ENCODE measurements at regions of chr2 and their contacts with region 1.

Region 1: DNA sequence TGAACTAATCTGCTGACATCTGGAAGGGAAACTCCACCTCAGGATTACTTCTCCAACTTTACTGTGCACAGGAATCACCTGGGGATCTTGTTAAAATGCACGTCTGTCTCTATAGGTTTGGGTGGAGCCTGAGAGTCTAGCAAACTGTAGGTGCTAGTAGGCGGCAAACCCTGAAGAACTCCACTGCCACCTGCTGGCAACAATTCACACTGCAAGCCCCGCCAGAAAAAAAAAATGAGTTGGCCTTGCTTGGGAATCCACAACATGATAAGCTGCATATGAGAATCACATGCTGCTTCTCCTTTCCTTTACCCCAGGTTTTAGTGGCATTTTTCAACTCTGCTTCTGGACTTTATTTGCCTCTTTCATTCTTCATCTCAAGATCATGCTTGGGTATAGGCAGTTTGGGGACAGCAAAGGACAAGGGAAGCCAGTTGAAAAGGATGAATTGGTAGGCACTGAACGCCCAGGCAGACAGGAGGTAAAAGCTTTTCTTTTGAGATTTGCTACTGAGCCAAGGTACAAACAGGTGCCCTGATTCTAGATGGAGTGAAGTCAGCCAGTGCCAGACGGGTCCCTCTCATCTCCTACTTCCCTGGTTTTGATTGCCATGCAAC is 88.8 kb downstream of the VIT start:
- DNase-seq: peak; percentile 69 to 94
- H3K4me3 ChIP-seq: peak overlapping the region in 1 of 4 experiments; percentile 23; a peak in 1 of 8 replicates
- H3K27ac ChIP-seq: no peak overlapping the region
- H3K4me1 ChIP-seq: peaks cover 0 to 11% (median 5%) of the 10 kb centered on the region in 4 experiments; a peak in 5 of 7 replicates
- H3K27me3 ChIP-seq: no peaks in the 10 kb centered on the region
- CTCF ChIP-seq: peak; percentile 81 to 92 (median 86)
- EP300 ChIP-seq: no peak
- POLR2A ChIP-seq: no peak
- RAD21 ChIP-seq: peak; percentile 79 to 86

Region 2: GRCh38 chr2:36701391-36701795 is 83.9 kb before region 1 on chr2:
- CTCF ChIA-PET with region 1: interaction called, 10 read pairs
- POLR2A ChIA-PET with region 1: no interaction called
- DNase-seq: peak in 1 of 2 experiments; percentile 14
- H3K4me3 ChIP-seq: no peak overlapping the region
- H3K27ac ChIP-seq: no peak overlapping the region
- H3K4me1 ChIP-seq: peaks cover 0 to 3% (median 0%) of the 10 kb centered on the region in 4 experiments; a peak in 1 of 7 replicates
- H3K27me3 ChIP-seq: no peaks in the 10 kb centered on the region
- CTCF ChIP-seq: 0 out of 4 replicates have a peak, but pooled peaks of 1 of the 3 experiments have one; percentile 2
- EP300 ChIP-seq: no peak
- POLR2A ChIP-seq: no peak
- RAD21 ChIP-seq: no peak

Region 3: DNA sequence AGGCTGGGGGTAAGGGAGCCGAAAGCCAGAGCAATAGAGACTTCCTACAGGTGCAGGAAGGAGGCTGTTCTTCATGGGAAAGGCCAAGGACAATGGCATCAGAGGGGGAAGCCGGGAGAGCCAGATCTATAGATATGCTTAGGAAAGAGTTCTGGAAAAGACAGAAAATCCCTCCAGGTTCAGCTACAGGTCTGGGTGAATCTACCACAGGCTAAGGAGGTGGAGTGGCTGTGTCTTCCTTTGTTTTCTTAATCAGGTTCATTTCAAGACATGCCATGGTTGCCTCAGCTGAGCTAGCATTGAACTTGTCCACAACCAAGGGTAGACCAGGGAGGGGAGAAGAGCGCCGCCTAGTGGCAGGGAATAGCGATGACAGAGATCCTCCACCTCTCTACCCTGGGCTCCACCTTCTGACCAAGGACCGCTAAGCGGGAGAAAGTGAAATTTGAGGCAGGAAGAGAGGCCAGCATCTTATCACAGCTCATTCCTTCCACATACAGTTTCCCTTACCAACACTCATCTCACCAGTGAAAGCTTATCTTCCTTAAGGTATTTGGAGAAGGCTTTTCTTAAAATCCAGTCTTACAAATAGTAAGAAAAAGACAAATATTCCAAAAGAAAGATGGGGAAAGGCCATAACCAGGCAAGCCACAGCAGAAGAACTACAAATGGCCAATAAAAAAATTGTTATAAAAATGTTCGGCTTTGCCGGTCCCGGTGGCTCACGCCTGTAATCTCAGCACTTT is 14.6 kb before region 1 on chr2:
- CTCF ChIA-PET with region 1: interaction called, 110 read pairs
- POLR2A ChIA-PET with region 1: interaction called, 3 read pairs
- DNase-seq: peak; percentile 62 to 86
- H3K4me3 ChIP-seq: no peak overlapping the region
- H3K27ac ChIP-seq: no peak overlapping the region
- H3K4me1 ChIP-seq: no peaks in the 10 kb centered on the region; a peak in 1 of 7 replicates
- H3K27me3 ChIP-seq: no peaks in the 10 kb centered on the region; a peak in 1 of 7 replicates
- CTCF ChIP-seq: peak; percentile 96 to 99 (median 98)
- EP300 ChIP-seq: no peak
- POLR2A ChIP-seq: no peak
- RAD21 ChIP-seq: peak; percentile 90 to 91

Region 4: DNA sequence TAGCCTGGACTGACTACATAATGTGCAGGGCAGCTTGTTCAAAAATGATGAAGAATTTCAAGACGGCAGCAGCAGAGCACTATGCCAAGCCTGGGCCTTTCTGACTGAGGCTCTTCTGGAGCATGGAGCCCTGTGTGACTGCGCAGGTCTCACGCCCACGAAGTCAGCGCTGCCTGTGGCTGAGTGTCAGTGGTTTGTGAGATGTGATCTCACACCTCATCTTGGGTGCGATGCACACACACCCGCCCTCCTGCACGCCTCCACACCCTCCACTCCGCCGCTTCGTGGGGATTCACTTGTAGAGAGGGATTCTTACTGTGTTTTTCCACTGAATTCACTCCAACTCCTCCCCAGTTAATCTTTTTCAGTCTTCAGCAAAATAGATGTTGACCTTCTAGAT is 15.1 kb after region 1 on chr2:
- CTCF ChIA-PET with region 1: interaction called, 33 read pairs
- POLR2A ChIA-PET with region 1: no interaction called
- DNase-seq: no peak
- H3K4me3 ChIP-seq: no peak overlapping the region
- H3K27ac ChIP-seq: no peak overlapping the region
- H3K4me1 ChIP-seq: peaks cover 0 to 4% (median 1%) of the 10 kb centered on the region in 4 experiments; a peak in 2 of 7 replicates
- H3K27me3 ChIP-seq: no peaks in the 10 kb centered on the region
- CTCF ChIP-seq: no peak
- EP300 ChIP-seq: no peak
- POLR2A ChIP-seq: no peak
- RAD21 ChIP-seq: no peak

Region 5: GRCh38 chr2:36812196-36812595 is 26.9 kb after region 1 on chr2:
- CTCF ChIA-PET with region 1: interaction called, 65 read pairs
- POLR2A ChIA-PET with region 1: no interaction called
- DNase-seq: peak; percentile 9 to 83
- H3K4me3 ChIP-seq: no peak overlapping the region
- H3K27ac ChIP-seq: no peak overlapping the region
- H3K4me1 ChIP-seq: no peaks in the 10 kb centered on the region
- H3K27me3 ChIP-seq: no peaks in the 10 kb centered on the region; a peak in 1 of 7 replicates
- CTCF ChIP-seq: peak; percentile 69 to 83 (median 71)
- EP300 ChIP-seq: no peak
- POLR2A ChIP-seq: no peak
- RAD21 ChIP-seq: peak; percentile 54 to 72

Region 6: GRCh38 chr2:36820942-36821605 is 35.8 kb after region 1 on chr2:
- CTCF ChIA-PET with region 1: interaction called, 10 read pairs
- POLR2A ChIA-PET with region 1: no interaction called
- DNase-seq: peak in 1 of 2 experiments; percentile 32
- H3K4me3 ChIP-seq: no peak overlapping the region
- H3K27ac ChIP-seq: no peak overlapping the region
- H3K4me1 ChIP-seq: peaks cover 3 to 6% (median 4%) of the 10 kb centered on the region in 4 experiments; a peak in 6 of 7 replicates
- H3K27me3 ChIP-seq: no peaks in the 10 kb centered on the region; a peak in 1 of 7 replicates
- CTCF ChIP-seq: no peak
- EP300 ChIP-seq: no peak
- POLR2A ChIP-seq: no peak
- RAD21 ChIP-seq: no peak

Measured in H1 (cell line).